ENCODE measurements at regions of chr4 and their contacts with region 1.

Region 1: GRCh38 chr4:88823058-88823919 is 125.7 kb upstream of the NAP1L5 start:
- DNase-seq: peak; percentile 61 to 92
- ATAC-seq: peak; percentile 91 to 97 (median 95)
- H3K4me3 ChIP-seq: peak overlapping the region; percentile 47
- H3K4me3 Mint-ChIP-seq: peak overlapping the region; percentile 91
- H3K27ac ChIP-seq: peak overlapping the region; percentile 82
- H3K27ac Mint-ChIP-seq: peak overlapping the region; percentile 92 to 97
- H3K4me1 ChIP-seq: peaks cover 6% of the 10 kb centered on the region
- H3K4me1 Mint-ChIP-seq: peaks cover 23 to 26% of the 10 kb centered on the region in 2 donors
- H3K27me3 ChIP-seq: no peaks in the 10 kb centered on the region
- H3K27me3 Mint-ChIP-seq: no peaks in the 10 kb centered on the region
- CTCF ChIP-seq: no peak

Region 2: DNA sequence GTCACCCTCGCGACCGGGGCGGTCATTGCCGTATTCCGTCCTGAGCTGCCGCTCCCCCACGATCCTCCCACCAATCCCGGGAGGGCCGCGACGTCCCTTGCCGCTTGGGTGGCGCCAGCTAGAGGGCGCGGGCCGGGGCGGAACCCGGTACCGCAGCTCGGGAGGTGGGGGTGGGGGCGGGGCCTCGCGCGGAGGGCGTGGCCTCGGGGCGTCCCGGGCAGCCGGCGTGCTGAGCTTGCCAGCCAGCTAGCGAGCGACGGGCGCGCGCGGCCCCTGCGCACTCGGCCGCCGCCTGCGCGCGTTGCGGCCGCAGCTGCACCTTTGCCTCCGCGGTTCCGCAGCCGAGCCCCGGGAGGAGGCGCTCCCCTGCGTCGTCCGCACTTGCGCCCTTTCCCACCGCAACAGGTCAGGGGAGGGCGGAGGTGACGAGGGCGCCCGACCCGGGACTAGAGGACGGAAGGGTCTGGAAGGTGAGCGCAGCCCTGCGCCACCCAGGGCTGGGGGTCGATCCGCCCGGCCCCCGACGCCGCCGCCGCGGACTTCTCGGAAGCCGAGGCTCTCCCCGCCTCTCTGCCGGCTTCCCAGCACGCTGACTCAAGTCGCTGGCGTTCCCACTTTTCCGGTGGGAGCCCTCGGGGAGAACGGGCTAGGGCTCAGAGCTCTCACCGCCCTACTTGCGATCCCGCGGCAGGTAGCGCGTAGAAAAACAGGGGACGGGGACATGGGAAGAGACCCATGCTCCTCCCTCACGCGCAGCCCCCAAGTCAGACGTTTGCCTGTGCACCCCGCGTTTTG is 1888.3 kb before region 1 on chr4 and contains the start of gene AFF1:
- intact Hi-C with region 1: loop called (anchors 10 kb)
- DNase-seq: peak; percentile 81 to 96
- ATAC-seq: peak; percentile 69 to 91 (median 85)
- H3K4me3 ChIP-seq: peak within 1 kb of the TSS; percentile 84
- H3K4me3 Mint-ChIP-seq: peak within 1 kb of the TSS; percentile 98
- H3K27ac ChIP-seq: peak within 1 kb of the TSS; percentile 84
- H3K27ac Mint-ChIP-seq: peak within 1 kb of the TSS; percentile 86 to 90
- H3K4me1 ChIP-seq: peaks cover 28% of the 10 kb centered on the region
- H3K4me1 Mint-ChIP-seq: peaks cover 44 to 54% of the 10 kb centered on the region in 2 donors
- H3K27me3 ChIP-seq: no peaks in the 10 kb centered on the region
- H3K27me3 Mint-ChIP-seq: no peaks in the 10 kb centered on the region
- CTCF ChIP-seq: no peak
- total RNA-seq, gene AFF1: 87.9 to 93.4 (median 91.7) TPM

Region 3: DNA sequence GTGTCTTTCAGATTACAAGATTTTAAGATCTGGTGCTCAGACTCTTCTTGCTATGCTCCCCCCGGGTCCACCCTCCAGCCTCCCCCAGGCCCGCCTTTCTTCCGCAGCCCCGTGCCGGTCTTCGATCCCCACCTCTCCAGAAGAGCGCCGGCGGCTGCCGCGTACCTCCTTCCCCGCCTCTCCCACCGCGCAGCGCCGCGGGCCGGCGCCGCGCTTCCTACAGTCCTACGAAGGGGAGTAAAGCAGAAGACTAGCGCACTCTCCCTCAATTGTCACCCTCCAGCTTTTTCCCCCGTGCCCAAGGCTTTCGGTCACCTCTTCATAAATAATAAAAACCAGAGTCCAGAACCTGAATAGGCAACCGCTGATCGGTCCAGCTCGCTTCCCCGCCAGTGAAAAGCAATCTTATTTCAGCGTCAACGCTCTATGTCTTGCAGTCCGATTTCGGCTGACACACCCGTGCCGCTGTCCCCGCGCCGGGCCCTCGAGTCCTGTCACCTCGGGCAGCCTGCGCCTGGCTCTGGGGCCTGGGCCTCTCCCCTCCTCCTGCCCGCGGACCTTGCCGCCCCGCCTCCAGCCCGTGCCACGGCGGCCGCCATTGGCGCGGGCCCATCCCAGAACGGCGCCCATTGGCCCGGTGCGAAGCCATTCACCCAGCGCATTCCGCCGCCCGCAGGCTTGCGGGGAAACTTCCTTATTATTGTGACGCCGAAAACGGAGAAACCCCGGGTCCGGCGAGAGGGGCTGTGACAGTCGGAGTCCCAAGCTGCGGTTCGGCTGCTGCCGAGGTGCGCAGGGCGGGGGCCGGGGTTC is 231.3 kb before region 1 on chr4 and contains the start of gene HERC3:
- intact Hi-C with region 1: loop called (anchors 1 kb)
- DNase-seq: peak; percentile 91 to 93
- ATAC-seq: peak; percentile 85 to 97 (median 91)
- H3K4me3 ChIP-seq: peak within 1 kb of the TSS; percentile 100
- H3K4me3 Mint-ChIP-seq: peak within 1 kb of the TSS; percentile 96
- H3K27ac ChIP-seq: peak within 1 kb of the TSS; percentile 90
- H3K27ac Mint-ChIP-seq: peak within 1 kb of the TSS; percentile 91 to 97
- H3K4me1 ChIP-seq: peaks cover 6% of the 10 kb centered on the region
- H3K4me1 Mint-ChIP-seq: peaks cover 29 to 30% of the 10 kb centered on the region in 2 donors
- H3K27me3 ChIP-seq: no peaks in the 10 kb centered on the region
- H3K27me3 Mint-ChIP-seq: no peaks in the 10 kb centered on the region
- CTCF ChIP-seq: no peak
- total RNA-seq, gene HERC3: 59.1 to 85.0 (median 61.9) TPM

Region 4: GRCh38 chr4:89024051-89024675 is 200.9 kb after region 1 on chr4:
- intact Hi-C with region 1: loop called (anchors 1 kb)
- DNase-seq: peak in 1 of 2 donors; percentile 87
- ATAC-seq: peak; percentile 92 to 99 (median 98)
- H3K4me3 ChIP-seq: no peak overlapping the region
- H3K4me3 Mint-ChIP-seq: no peak overlapping the region
- H3K27ac ChIP-seq: no peak overlapping the region
- H3K27ac Mint-ChIP-seq: no peak overlapping the region
- H3K4me1 ChIP-seq: no peaks in the 10 kb centered on the region
- H3K4me1 Mint-ChIP-seq: no peaks in the 10 kb centered on the region
- H3K27me3 ChIP-seq: no peaks in the 10 kb centered on the region
- H3K27me3 Mint-ChIP-seq: no peaks in the 10 kb centered on the region
- CTCF ChIP-seq: peak; percentile 77

Region 5: GRCh38 chr4:89307446-89308160 is 484.3 kb after region 1 on chr4 and contains the start of gene GPRIN3:
- intact Hi-C with region 1: loop called (anchors 10 kb)
- DNase-seq: peak; percentile 69 to 81
- ATAC-seq: peak; percentile 64 to 78 (median 75)
- H3K4me3 ChIP-seq: peak within 1 kb of the TSS; percentile 75
- H3K4me3 Mint-ChIP-seq: peak within 1 kb of the TSS; percentile 91
- H3K27ac ChIP-seq: peak within 1 kb of the TSS; percentile 67
- H3K27ac Mint-ChIP-seq: peak within 1 kb of the TSS in 1 of 2 donors; percentile 96
- H3K4me1 ChIP-seq: peaks cover 22% of the 10 kb centered on the region
- H3K4me1 Mint-ChIP-seq: peaks cover 54 to 56% of the 10 kb centered on the region in 2 donors
- H3K27me3 ChIP-seq: no peaks in the 10 kb centered on the region
- H3K27me3 Mint-ChIP-seq: no peaks in the 10 kb centered on the region
- CTCF ChIP-seq: no peak
- total RNA-seq, gene GPRIN3: 48.3 to 50.7 (median 48.5) TPM